ENCODE measurements at regions of chr2 and their contacts with region 1.

Region 1: GRCh38 chr2:172234716-172235691 is 132.3 kb upstream of the DLX2 start:
- DNase-seq: peak; percentile 13 to 21
- ATAC-seq: peak in 7 of 8 donors; percentile 20 to 47 (median 32)
- H3K4me3 ChIP-seq: peak overlapping the region; percentile 23 to 62 (median 48)
- H3K27ac ChIP-seq: peak overlapping the region in 6 of 10 donors; percentile 8 to 73 (median 48)
- H3K4me1 ChIP-seq: peaks cover 0 to 41% (median 21%) of the 10 kb centered on the region in 9 donors
- H3K27me3 ChIP-seq: peaks cover 0 to 52% (median 43%) of the 10 kb centered on the region in 7 donors
- CTCF ChIP-seq: no peak

Region 2: GRCh38 chr2:172147944-172148650 is 86.9 kb before region 1 on chr2:
- intact Hi-C with region 1: no loop called
- DNase-seq: no peak
- ATAC-seq: peak in 2 of 8 donors; percentile 71 to 77
- H3K4me3 ChIP-seq: no peak overlapping the region
- H3K27ac ChIP-seq: no peak overlapping the region
- H3K4me1 ChIP-seq: no peaks in the 10 kb centered on the region
- H3K27me3 ChIP-seq: peaks cover 0 to 28% (median 6%) of the 10 kb centered on the region in 7 donors
- CTCF ChIP-seq: no peak

Region 3: DNA sequence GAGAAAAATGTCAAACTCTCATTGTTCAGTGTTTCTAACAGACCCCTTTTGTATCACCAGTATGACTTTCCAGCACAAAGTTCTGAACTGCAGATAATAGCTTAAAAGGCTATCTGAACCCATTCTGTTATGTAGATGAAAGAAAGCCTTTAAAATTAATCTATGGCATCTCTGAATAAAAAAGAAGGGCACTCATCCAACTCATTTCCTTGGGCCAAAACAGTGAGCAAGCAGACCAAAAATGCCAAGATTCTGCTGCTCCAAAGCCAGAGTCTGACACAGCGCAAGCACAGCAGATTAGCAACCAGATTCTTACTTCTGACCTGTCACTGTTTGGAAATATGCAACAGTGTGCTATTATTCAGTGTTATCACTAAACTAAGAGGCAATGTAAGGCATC is 169.8 kb after region 1 on chr2:
- intact Hi-C with region 1: loop called in 1 of 10 experiments (anchors 5 kb)
- DNase-seq: no peak
- ATAC-seq: peak in 6 of 8 donors; percentile 14 to 53 (median 29)
- H3K4me3 ChIP-seq: no peak overlapping the region
- H3K27ac ChIP-seq: peak overlapping the region in 7 of 10 donors; percentile 37 to 64 (median 53)
- H3K4me1 ChIP-seq: peaks cover 0 to 52% (median 15%) of the 10 kb centered on the region in 9 donors
- H3K27me3 ChIP-seq: no peaks in the 10 kb centered on the region
- CTCF ChIP-seq: no peak

Measured in heart right ventricle (tissue), 16 donors.